ENCODE measurements at regions of chr6 and their contacts with region 1.

Region 1: DNA sequence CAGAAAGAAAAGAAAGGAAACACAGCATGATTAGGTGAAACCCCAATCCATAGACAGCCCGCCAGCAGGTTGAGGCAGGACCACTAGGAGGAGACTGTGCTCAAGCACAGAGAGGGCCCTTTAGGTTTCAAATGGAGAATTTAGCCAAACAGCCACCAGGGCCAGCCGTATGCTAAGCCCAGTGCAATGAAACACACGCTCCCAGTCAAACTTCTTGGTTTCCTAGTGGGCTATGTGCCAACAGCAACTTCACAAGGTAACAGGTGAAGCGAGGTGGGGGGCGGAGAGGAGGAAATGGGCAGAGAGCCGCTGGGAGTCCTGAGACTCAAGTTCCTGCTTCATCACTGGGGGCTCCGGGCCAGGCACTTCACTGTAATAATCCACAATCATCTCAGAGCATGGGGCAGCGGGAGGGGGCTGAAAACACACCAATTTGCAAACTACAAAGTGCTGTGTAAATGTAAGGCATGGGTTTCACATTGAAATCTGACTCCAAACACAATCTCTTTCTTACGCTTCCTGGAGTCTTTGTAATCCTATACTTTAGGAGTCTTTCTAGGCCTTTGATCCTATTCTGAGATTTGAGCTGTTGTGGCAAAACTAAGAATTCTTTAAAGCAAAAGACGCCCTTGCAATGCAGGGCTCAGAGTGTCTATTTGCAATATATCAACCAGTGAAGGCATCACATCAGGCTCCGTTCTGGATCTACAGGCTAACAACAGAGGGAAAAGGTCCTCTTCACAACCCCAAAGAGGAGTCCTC is 117.3 kb downstream of the OPRM1 start:
- DNase-seq: peak; percentile 63
- H3K4me3 Mint-ChIP-seq: no peak overlapping the region
- H3K27ac Mint-ChIP-seq: no peak overlapping the region
- H3K4me1 Mint-ChIP-seq: peaks cover 12% of the 10 kb centered on the region
- H3K27me3 Mint-ChIP-seq: peaks cover 22% of the 10 kb centered on the region
- CTCF ChIP-seq: peak; percentile 39

Region 2: DNA sequence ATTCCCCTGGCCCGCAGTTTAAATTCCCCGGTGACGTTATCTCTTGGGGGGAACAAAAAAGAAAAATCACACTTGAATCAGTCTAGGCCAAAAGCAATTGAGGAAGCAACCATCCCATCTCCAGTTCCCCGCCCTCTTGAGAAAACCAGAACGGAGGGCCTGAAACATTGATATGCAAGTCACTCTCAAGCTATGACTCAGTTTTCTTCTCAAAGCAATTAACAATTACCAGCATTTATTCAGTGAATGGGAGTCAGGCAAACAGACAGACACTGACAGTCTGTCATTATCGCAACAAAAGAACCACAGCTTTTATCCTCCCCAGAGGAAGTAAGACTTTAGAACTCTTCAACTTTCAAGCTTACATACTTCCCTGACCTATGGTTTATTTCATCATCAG is 16.4 kb before region 1 on chr6:
- CTCF ChIA-PET with region 1: no interaction called
- intact Hi-C with region 1: no loop called
- DNase-seq: no peak
- H3K4me3 Mint-ChIP-seq: no peak overlapping the region
- H3K27ac Mint-ChIP-seq: no peak overlapping the region
- H3K4me1 Mint-ChIP-seq: no peaks in the 10 kb centered on the region
- H3K27me3 Mint-ChIP-seq: peaks cover 19% of the 10 kb centered on the region
- CTCF ChIP-seq: no peak

Region 3: GRCh38 chr6:154276810-154277628 is 120.7 kb after region 1 on chr6:
- CTCF ChIA-PET with region 1: no interaction called
- intact Hi-C with region 1: loop called (anchors 1 kb)
- DNase-seq: no peak
- H3K4me3 Mint-ChIP-seq: no peak overlapping the region
- H3K27ac Mint-ChIP-seq: no peak overlapping the region
- H3K4me1 Mint-ChIP-seq: peaks cover 7% of the 10 kb centered on the region
- H3K27me3 Mint-ChIP-seq: no peaks in the 10 kb centered on the region
- CTCF ChIP-seq: peak; percentile 12

Region 4: DNA sequence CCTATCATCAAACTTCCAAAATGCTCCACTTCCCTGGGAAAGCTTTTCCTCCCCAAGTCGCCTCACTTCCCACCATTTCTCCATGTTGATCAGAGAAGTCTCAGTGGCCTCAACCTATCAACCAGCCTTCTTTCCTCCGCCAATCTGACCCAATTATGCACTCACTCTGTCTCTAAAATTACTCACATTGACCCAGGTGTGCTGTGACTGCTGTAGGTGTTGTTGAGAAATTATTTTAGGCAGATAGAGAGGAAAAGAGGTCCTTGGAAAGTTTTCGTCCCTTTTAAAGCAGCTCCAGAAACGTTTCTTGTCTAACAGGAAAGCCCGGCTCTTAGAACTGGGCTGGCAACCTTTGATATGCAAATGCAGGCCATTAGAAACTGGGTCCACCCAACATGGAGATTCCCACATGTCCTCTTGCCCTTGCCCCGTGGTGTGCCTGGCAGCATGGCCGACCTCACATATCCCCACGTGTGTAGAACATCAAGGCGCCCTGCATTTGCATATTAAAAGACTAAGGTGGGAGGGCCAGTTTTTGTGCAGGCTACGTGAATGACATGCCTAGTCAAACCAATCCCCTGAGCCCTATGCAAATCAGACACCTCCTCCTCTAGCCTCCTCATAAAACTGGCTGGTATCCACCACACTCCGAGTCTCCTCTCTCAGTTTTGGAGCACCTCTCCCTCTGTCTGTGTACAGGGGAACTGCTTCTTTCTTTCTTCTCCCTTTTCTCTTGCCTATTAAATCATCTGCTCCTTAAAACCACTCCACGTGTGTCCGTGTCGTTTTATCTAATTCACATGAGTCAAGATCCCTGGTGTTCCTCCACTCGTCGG is 187.4 kb after region 1 on chr6:
- CTCF ChIA-PET with region 1: no interaction called
- intact Hi-C with region 1: loop called (anchors 5 kb)
- DNase-seq: peak; percentile 60
- H3K4me3 Mint-ChIP-seq: peak overlapping the region; percentile 63
- H3K27ac Mint-ChIP-seq: peak overlapping the region; percentile 38
- H3K4me1 Mint-ChIP-seq: peaks cover 18% of the 10 kb centered on the region
- H3K27me3 Mint-ChIP-seq: no peaks in the 10 kb centered on the region
- CTCF ChIP-seq: no peak

Region 5: GRCh38 chr6:154370545-154370944 is 214.2 kb after region 1 on chr6:
- CTCF ChIA-PET with region 1: interaction called, 3 read pairs
- intact Hi-C with region 1: loop called (anchors 5 kb)
- DNase-seq: peak; percentile 9
- H3K4me3 Mint-ChIP-seq: no peak overlapping the region
- H3K27ac Mint-ChIP-seq: no peak overlapping the region
- H3K4me1 Mint-ChIP-seq: no peaks in the 10 kb centered on the region
- H3K27me3 Mint-ChIP-seq: peaks cover 50% of the 10 kb centered on the region
- CTCF ChIP-seq: peak; percentile 19

Region 6: GRCh38 chr6:154410619-154411072 is 254.3 kb after region 1 on chr6:
- CTCF ChIA-PET with region 1: no interaction called
- intact Hi-C with region 1: loop called (anchors 1 kb)
- DNase-seq: peak; percentile 42
- H3K4me3 Mint-ChIP-seq: no peak overlapping the region
- H3K27ac Mint-ChIP-seq: no peak overlapping the region
- H3K4me1 Mint-ChIP-seq: peaks cover 28% of the 10 kb centered on the region
- H3K27me3 Mint-ChIP-seq: no peaks in the 10 kb centered on the region
- CTCF ChIP-seq: no peak

Region 7: DNA sequence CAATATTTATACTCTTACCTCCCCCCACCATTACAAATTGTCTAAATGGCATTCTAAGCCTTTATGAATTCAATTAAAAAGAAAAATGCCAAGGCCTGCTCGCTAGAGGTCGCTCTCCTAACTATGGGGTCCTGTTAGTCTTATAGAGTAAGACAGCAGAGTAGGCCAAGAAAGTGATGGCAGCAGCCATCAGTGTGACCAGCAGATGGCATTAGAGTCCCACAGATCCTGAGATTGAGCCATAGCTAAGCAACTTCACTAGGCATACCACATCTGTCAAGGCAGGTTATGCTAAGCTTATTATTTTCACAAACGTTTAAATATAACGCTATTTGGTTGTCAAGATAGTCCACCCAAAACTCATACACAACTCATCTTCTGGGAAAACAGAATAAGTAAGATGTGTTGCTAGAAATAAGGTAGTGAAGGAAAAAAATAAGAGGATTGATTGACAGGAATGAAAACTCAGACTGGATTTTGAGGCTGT is 519.3 kb after region 1 on chr6:
- CTCF ChIA-PET with region 1: no interaction called
- intact Hi-C with region 1: loop called (anchors 2 kb)
- DNase-seq: peak; percentile 77
- H3K4me3 Mint-ChIP-seq: no peak overlapping the region
- H3K27ac Mint-ChIP-seq: no peak overlapping the region
- H3K4me1 Mint-ChIP-seq: no peaks in the 10 kb centered on the region
- H3K27me3 Mint-ChIP-seq: no peaks in the 10 kb centered on the region
- CTCF ChIP-seq: peak; percentile 66